Activated CD4-positive, alpha-beta memory T cell treated with anti-CD3 and anti-CD28 coated beads for 36 hours (primary cell): ENCODE measurements at regions of chr9 and their contacts with region 1.

Region 1: DNA sequence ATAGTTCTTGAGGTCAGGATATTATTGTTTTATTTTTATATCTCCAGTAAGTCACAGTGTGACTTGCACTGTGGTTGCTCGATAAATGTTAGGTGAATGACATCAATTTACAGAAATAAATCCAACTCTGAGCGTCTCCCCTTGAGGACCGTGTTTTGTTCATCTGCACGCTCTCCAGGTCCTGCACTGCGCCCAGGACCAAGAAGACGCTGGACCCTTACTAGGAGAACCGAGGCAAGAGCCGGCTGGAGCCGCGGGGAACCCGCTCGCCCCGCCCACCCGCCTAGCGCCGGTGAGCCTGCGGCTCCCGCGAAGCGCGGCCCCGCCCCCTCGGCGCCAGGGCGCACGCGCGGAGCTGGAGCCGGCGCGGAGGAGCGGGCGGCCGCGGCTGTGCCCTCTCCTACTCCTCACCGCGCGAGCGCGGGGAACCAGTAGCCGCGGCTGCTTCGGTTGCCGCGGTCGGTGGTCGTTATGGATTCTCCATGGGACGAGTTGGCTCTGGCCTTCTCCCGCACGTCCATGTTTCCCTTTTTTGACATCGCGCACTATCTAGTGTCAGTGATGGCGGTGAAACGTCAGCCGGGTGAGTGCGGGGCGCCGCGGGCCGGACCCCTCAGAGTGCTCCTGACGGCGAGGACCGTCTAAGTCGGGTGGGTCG is at the start of gene TMEM38B:
- DNase-seq: peak; percentile 82
- H3K4me3 Mint-ChIP-seq: peak within 1 kb of the TSS; percentile 80
- H3K27ac Mint-ChIP-seq: peak within 1 kb of the TSS; percentile 26
- H3K4me1 Mint-ChIP-seq: peaks cover 25% of the 10 kb centered on the region
- H3K27me3 Mint-ChIP-seq: peaks cover 20% of the 10 kb centered on the region
- total RNA-seq, gene TMEM38B: 12.1 to 13.8 TPM

Region 2: DNA sequence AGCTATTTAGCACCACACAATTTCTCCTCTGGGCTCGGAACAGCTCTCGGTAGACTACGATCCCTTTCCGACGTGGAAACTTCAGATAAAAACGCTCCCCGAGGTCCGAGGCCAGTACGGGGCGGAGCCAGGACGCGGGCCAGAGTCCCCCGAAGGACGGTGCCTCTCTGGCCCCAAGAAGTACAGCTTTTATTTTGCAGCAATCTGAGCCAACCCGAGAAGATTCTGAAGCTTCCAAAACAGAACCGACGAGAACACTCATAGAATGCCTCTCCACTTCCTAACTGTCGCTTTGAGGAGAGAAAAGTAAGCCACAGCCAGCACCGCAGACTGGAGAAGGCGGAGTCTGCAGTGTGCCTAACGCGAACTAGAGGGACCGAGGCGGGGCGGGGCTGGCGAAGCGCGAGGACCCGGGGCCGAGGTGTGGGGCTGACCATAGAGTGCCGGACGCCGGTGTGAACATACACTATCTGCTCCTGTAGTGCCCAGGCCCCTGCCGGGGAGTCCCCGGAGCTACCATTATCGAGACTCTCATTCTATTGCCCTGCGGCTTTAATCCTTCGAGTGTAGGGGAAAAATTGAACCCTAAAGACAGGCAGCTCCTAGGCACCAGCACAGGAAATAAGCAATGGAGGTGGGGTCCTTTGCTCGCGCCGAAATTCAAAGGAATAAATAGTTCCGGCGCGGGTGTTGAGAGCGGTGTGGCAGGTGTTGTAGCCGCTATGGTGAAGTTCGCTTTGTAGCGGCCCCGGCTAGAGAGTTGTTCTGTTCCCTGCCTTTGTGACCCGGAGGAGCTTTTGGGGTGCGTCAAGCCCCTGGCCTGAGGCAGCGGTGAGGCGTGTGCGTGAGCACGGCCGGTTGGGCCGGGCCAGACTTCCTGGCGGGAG is 1600.4 kb before region 1 on chr9 and contains the start of gene SMC2:
- CTCF ChIA-PET with region 1: no interaction called
- POLR2A ChIA-PET with region 1: no interaction called
- intact Hi-C with region 1: loop called (anchors 1 kb)
- DNase-seq: peak; percentile 94
- H3K4me3 Mint-ChIP-seq: peak within 1 kb of the TSS; percentile 90
- H3K27ac Mint-ChIP-seq: peak within 1 kb of the TSS; percentile 99
- H3K4me1 Mint-ChIP-seq: peaks cover 32% of the 10 kb centered on the region
- H3K27me3 Mint-ChIP-seq: no peaks in the 10 kb centered on the region
- total RNA-seq, gene SMC2: 61.0 to 61.9 TPM

Region 3: GRCh38 chr9:104968025-104968982 is 726.0 kb before region 1 on chr9:
- CTCF ChIA-PET with region 1: no interaction called
- POLR2A ChIA-PET with region 1: no interaction called
- intact Hi-C with region 1: loop called (anchors 10 kb)
- DNase-seq: peak; percentile 92
- H3K4me3 Mint-ChIP-seq: peak overlapping the region; percentile 89
- H3K27ac Mint-ChIP-seq: peak overlapping the region; percentile 84
- H3K4me1 Mint-ChIP-seq: peaks cover 10% of the 10 kb centered on the region
- H3K27me3 Mint-ChIP-seq: peaks cover 15% of the 10 kb centered on the region

Region 4: DNA sequence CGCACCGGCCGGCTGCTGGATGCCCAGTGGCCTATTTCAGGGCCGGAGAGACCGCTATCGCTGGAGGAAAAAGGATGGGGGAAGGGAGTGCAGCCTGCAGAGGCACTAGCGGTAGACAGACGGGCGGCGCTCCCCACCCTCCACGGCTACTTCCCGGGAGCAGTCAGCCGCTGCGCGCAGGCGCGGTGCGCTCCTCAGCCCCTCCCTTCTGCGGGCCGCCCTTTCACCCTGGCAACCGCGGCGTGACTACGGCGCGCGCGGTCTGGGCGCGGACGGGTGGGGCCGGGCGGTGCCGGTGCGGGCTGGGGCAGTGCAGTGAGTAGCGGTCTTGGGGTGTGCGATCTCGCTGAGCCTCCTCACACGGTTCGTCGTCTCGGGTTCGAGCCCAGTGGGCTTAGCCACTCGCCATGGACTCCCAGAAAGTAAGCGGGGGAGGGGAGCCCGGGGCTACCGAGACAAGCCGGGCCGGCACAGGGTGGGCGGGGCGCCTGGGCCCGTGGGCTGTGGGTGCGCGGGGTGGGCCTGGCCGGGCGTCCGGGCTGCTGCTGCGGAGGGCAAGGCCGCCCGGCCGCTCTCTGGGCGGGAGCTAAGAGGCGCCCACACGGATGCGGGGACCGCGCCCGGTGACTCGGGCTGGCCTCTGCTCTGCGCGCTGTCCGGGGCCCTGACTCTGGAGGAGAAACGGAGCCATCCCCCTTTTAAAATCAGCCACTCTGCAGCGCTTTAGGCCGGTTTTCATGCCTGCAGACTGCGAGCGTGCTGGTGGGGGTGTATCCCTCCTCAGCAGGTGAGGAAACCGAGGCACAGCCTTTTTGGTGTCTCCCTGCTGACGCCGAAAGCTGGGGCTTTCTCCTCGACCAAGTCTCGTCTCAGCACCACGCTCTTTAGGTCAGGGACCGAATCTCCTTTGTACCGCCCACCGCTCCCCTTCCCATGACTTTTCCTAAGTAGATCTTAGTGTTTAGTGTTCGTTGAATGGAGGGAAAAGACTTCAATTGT is 246.2 kb before region 1 on chr9 and contains the start of gene FSD1L:
- CTCF ChIA-PET with region 1: no interaction called
- POLR2A ChIA-PET with region 1: interaction called, 4 read pairs
- intact Hi-C with region 1: loop called (anchors 1 kb)
- DNase-seq: peak; percentile 90
- H3K4me3 Mint-ChIP-seq: peak within 1 kb of the TSS; percentile 63
- H3K27ac Mint-ChIP-seq: peak within 1 kb of the TSS; percentile 49
- H3K4me1 Mint-ChIP-seq: peaks cover 13% of the 10 kb centered on the region
- H3K27me3 Mint-ChIP-seq: no peaks in the 10 kb centered on the region
- total RNA-seq, gene FSD1L: 3.2 to 3.6 TPM

Region 5: GRCh38 chr9:105541838-105542237 is 152.5 kb before region 1 on chr9:
- CTCF ChIA-PET with region 1: no interaction called
- POLR2A ChIA-PET with region 1: no interaction called
- intact Hi-C with region 1: loop called (anchors 1 kb)
- DNase-seq: no peak
- H3K4me3 Mint-ChIP-seq: no peak overlapping the region
- H3K27ac Mint-ChIP-seq: peak overlapping the region; percentile 24
- H3K4me1 Mint-ChIP-seq: peaks cover 9% of the 10 kb centered on the region
- H3K27me3 Mint-ChIP-seq: no peaks in the 10 kb centered on the region

Region 6: DNA sequence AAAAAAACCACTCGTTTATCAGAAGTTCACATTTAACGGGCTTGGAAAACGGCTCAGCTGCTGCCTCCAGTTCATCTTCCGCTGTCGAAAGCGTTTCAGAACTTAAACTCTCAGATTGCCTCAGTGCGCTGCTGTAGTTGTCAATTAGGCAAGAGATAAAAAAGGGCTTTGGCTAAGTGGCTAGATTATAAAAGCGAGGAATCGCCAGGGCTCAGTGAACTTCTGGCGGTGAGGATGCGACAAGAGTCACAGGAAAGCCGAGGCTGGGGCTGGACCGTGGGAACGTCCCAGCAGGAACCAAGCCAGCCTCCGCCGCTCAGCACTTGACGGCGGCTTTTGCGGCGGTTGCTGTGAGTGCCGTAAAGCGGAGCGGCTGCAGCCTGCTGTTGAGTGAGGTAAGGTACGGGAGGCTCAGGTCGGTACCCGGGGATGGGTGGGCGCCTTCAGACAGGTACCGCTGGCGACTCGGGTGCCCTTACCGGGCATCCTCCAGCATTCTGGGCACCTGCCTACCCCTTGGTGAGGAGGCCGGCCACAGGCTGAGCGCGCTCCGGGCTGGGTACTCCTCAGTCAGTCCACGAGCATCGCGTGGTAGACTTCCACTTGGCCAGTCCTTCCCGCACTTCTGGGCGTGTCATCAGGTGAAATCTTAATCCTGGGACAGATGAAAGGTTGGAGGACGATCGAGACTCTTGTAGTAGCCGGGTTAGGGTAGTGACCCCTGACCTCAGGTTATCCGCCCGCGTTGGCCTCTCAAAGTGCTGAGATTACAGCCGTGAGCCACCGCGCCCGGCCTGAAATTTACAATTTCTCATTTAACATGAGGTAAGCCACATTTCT is 136.3 kb before region 1 on chr9 and contains the start of gene FKTN:
- CTCF ChIA-PET with region 1: no interaction called
- POLR2A ChIA-PET with region 1: no interaction called
- intact Hi-C with region 1: loop called (anchors 1 kb)
- DNase-seq: peak; percentile 90
- H3K4me3 Mint-ChIP-seq: peak within 1 kb of the TSS; percentile 94
- H3K27ac Mint-ChIP-seq: peak within 1 kb of the TSS; percentile 52
- H3K4me1 Mint-ChIP-seq: peaks cover 21% of the 10 kb centered on the region
- H3K27me3 Mint-ChIP-seq: no peaks in the 10 kb centered on the region
- total RNA-seq, gene FKTN: 15.8 to 16.8 TPM

Region 7: DNA sequence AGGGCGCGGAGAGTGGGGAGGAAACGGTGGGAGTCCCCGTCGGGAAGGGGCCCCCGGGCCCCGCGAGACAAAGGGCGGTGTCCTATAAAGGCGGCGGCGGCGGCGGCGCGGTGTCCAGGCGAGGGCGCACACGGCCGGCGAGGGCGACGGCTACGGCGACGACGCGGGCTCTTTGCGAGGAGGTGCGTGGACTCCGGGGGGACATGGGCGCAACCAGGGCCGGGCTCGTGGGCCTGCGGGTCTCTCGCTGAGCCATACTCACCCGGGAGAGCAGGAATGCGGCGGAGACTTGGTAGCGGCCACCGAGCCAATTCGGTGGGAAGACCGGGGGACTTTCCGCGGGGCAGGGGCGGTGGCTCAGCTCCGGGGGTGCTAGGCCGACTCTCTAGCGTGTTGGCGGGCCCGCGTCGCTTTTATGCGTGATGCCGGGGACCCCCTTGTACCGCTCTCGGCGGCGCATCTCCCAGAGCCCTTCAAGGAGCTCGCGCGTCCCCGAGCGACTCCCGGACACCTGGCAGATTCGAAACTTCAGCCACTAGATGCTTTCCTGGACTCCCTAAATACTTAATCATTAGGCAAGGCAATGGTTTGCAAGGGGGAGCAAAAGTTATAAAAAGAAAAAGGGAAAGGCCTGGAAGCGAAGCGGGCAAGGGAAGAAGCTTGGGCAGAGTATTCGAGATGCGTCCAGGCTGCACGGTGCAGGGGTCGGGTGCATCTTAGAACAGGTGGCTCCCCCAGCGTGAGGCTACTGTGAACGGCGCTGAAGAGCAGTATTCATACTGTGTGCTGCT is 38.0 kb before region 1 on chr9:
- CTCF ChIA-PET with region 1: no interaction called
- POLR2A ChIA-PET with region 1: interaction called, 5 read pairs
- intact Hi-C with region 1: loop called (anchors 5 kb)
- DNase-seq: peak; percentile 28
- H3K4me3 Mint-ChIP-seq: peak overlapping the region; percentile 59
- H3K27ac Mint-ChIP-seq: no peak overlapping the region
- H3K4me1 Mint-ChIP-seq: peaks cover 10% of the 10 kb centered on the region
- H3K27me3 Mint-ChIP-seq: peaks cover 25% of the 10 kb centered on the region

Region 8: DNA sequence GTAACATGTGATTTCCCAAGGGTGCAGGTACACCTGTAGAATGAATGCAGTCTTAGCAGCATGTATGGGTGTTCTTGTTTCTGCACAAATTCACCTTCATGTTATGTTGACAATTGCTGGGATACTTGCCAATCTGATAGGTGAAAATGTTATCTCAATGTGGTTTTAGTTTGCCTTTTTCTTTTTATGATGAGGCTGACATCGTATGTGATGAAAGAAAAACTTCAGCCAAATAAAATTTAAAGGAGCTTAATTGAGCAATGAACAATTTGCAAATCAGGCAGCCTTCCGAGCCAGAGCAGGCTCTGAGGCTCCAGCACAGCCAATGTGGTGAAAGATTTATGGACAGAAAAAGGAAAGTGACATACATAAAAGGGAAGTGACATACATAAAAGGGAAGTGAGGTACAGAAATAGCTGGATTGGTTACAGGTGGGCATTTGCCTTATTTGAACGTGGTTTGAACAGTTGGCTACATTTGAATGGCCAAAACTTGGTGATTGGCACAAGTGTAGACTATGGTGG is 21.5 kb before region 1 on chr9:
- CTCF ChIA-PET with region 1: no interaction called
- POLR2A ChIA-PET with region 1: no interaction called
- intact Hi-C with region 1: no loop called
- DNase-seq: no peak
- H3K4me3 Mint-ChIP-seq: no peak overlapping the region
- H3K27ac Mint-ChIP-seq: no peak overlapping the region
- H3K4me1 Mint-ChIP-seq: no peaks in the 10 kb centered on the region
- H3K27me3 Mint-ChIP-seq: peaks cover 5% of the 10 kb centered on the region